Panc1 (cell line): ENCODE measurements at regions of chr4 and their contacts with region 1.

Region 1: GRCh38 chr4:77347341-77347966 is 190.4 kb downstream of the CCNG2 start:
- DNase-seq: no peak
- ATAC-seq: no peak
- H3K4me3 ChIP-seq: no peak overlapping the region
- H3K27ac ChIP-seq: no peak overlapping the region
- H3K4me1 ChIP-seq: no peaks in the 10 kb centered on the region
- H3K27me3 ChIP-seq: no peaks in the 10 kb centered on the region
- CTCF ChIP-seq: no peak

Region 2: GRCh38 chr4:77104791-77105540 is 242.5 kb before region 1 on chr4:
- CTCF ChIA-PET with region 1: no interaction called
- POLR2A ChIA-PET with region 1: interaction called, 10 read pairs
- in situ Hi-C with region 1: no loop called
- intact Hi-C with region 1: no loop called
- DNase-seq: no peak
- ATAC-seq: no peak
- H3K4me3 ChIP-seq: no peak overlapping the region
- H3K27ac ChIP-seq: no peak overlapping the region
- H3K4me1 ChIP-seq: no peaks in the 10 kb centered on the region
- H3K27me3 ChIP-seq: no peaks in the 10 kb centered on the region
- CTCF ChIP-seq: no peak